Body of pancreas (tissue), 4 donors: ENCODE measurements at regions of chr3 and their contacts with region 1.

Region 1: GRCh38 chr3:192444096-192444790 is 283.1 kb downstream of the FGF12 start:
- DNase-seq: peak; percentile 61 to 75 (median 68)
- ATAC-seq: peak; percentile 88
- H3K4me3 ChIP-seq: no peak overlapping the region
- H3K27ac ChIP-seq: no peak overlapping the region
- H3K4me1 ChIP-seq: peaks cover 14% of the 10 kb centered on the region
- H3K27me3 ChIP-seq: no peaks in the 10 kb centered on the region
- CTCF ChIP-seq: peak; percentile 91 to 99 (median 97)
- POLR2A ChIP-seq: no peak

Region 2: GRCh38 chr3:191425322-191425734 is 1018.9 kb before region 1 on chr3:
- intact Hi-C with region 1: loop called (anchors 10 kb)
- DNase-seq: no peak
- ATAC-seq: no peak
- H3K4me3 ChIP-seq: no peak overlapping the region
- H3K27ac ChIP-seq: no peak overlapping the region
- H3K4me1 ChIP-seq: peaks cover 6% of the 10 kb centered on the region
- H3K27me3 ChIP-seq: no peaks in the 10 kb centered on the region
- CTCF ChIP-seq: no peak
- POLR2A ChIP-seq: no peak

Region 3: DNA sequence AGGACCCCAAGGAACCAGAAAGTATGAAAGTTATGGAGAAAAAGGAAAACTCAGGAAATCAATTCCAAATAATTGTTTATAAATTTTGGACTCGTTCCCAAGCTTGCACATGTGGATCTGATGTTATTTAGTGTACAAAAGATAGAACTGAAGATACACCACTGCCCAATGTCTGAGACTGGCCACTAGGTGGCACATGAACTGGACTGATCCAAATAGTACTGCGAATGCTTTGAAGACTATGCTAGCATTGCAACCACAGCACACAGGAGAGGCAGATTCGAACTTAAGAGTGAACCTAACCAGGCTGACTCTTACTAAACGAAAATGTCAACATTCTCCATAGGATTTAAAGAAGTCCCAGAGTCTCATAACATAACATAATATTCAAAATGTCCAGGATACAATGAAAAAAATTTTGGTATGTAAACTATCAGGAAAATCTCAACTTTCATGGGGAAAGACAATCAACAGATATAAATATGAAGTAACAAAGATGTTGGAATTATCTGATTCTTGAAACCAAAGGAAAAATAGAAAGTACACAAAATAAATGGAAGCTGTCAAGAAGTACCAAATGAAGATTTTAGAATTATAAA is 313.6 kb before region 1 on chr3:
- intact Hi-C with region 1: loop called (anchors 10 kb)
- DNase-seq: peak; percentile 51 to 66 (median 58)
- ATAC-seq: peak; percentile 70
- H3K4me3 ChIP-seq: no peak overlapping the region
- H3K27ac ChIP-seq: no peak overlapping the region
- H3K4me1 ChIP-seq: no peaks in the 10 kb centered on the region
- H3K27me3 ChIP-seq: no peaks in the 10 kb centered on the region
- CTCF ChIP-seq: peak; percentile 40 to 68 (median 57)
- POLR2A ChIP-seq: no peak

Region 4: GRCh38 chr3:192188218-192188835 is 255.9 kb before region 1 on chr3:
- intact Hi-C with region 1: loop called (anchors 10 kb)
- DNase-seq: peak; percentile 61 to 80 (median 71)
- ATAC-seq: peak; percentile 63
- H3K4me3 ChIP-seq: no peak overlapping the region
- H3K27ac ChIP-seq: no peak overlapping the region
- H3K4me1 ChIP-seq: no peaks in the 10 kb centered on the region
- H3K27me3 ChIP-seq: no peaks in the 10 kb centered on the region
- CTCF ChIP-seq: peak; percentile 43 to 73 (median 63)
- POLR2A ChIP-seq: no peak